ENCODE measurements at regions of chr6 and their contacts with region 1.

Region 1: DNA sequence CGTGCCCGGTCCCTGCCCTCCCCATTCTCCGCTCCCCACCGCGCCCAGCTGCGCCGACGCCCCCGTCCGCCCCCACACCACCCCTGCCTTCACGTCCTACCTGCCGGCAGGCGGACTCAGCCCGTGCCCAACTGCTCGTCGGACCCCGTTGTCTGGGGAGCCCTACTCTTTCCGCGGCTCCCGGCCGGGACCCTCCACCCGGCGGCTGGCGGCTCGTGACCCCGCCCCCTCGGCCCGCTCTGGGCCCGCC is at the start of gene SERAC1:
- DNase-seq: no peak
- H3K4me3 ChIP-seq: peak within 1 kb of the TSS; percentile 77 to 97 (median 87)
- H3K27ac ChIP-seq: peak within 1 kb of the TSS; percentile 85 to 95
- H3K4me1 ChIP-seq: peaks cover 0 to 17% (median 9%) of the 10 kb centered on the region in 4 experiments
- H3K27me3 ChIP-seq: no peaks in the 10 kb centered on the region

Region 2: DNA sequence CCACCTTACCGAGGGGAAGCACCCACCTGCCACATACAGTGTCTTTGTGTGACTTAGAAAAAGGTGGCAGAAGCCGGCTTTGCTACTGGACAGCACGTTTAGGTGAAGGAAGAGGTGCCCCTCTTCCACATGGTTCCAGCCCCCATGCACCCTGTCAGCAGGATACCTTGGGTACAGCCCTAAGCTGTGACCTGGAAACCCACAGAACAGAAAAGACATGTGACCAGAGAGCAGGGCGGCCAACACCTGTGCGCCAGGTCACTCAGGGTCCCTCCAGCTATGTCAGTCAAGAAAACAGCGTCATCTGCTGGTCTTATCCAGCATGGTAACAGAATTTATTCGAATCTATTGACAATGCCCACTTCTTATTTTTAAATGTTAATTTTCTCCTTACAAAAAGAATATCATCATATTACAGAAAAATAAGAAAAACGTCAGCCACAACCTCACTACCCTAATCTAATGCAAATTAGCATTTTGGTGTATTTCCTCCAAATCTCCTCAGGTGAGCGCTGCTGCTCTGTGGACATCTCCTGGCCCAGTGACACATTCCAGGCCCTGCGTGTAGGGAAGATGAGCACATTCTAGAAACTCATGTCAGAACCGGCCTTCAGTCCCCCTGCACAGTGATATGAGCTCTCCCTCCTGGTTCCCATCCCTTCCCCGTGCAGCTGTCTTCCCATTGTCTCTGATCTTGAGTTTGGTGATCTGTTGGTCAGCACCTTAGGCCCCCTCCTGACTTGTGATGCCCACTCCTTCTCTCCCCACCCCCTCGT is 37.4 kb after region 1 on chr6:
- CTCF ChIA-PET with region 1: interaction called, 9 read pairs
- POLR2A ChIA-PET with region 1: interaction called, 20 read pairs
- DNase-seq: peak in 2 of 3 donors; percentile 36 to 45
- H3K4me3 ChIP-seq: no peak overlapping the region
- H3K27ac ChIP-seq: no peak overlapping the region
- H3K4me1 ChIP-seq: peaks cover 0 to 48% (median 21%) of the 10 kb centered on the region in 4 experiments
- H3K27me3 ChIP-seq: no peaks in the 10 kb centered on the region

Region 3: GRCh38 chr6:158518191-158519127 is 350.5 kb after region 1 on chr6:
- CTCF ChIA-PET with region 1: no interaction called
- POLR2A ChIA-PET with region 1: no interaction called
- DNase-seq: peak; percentile 55 to 77 (median 76)
- H3K4me3 ChIP-seq: peak overlapping the region in 6 of 7 experiments; percentile 40 to 76 (median 51)
- H3K27ac ChIP-seq: no peak overlapping the region
- H3K4me1 ChIP-seq: peaks cover 0 to 37% (median 22%) of the 10 kb centered on the region in 4 experiments
- H3K27me3 ChIP-seq: peaks cover 0 to 11% (median 0%) of the 10 kb centered on the region in 5 experiments

Measured in common myeloid progenitor, CD34-positive (primary cell).